ENCODE measurements at regions of chr10 and their contacts with region 1.

Region 1: GRCh38 chr10:12710594-12711349 is 290.7 kb downstream of the CCDC3 start:
- H3K4me3 Mint-ChIP-seq: no peak overlapping the region
- H3K27ac Mint-ChIP-seq: peak overlapping the region; percentile 70
- H3K4me1 Mint-ChIP-seq: peaks cover 46% of the 10 kb centered on the region
- H3K27me3 Mint-ChIP-seq: no peaks in the 10 kb centered on the region

Region 2: GRCh38 chr10:12195603-12196506 is 514.9 kb before region 1 on chr10 and contains the starts of genes CDC123 and NUDT5:
- intact Hi-C with region 1: loop called (anchors 5 kb)
- H3K4me3 Mint-ChIP-seq: peak within 1 kb of the TSS; percentile 95
- H3K27ac Mint-ChIP-seq: peak within 1 kb of the TSS; percentile 95
- H3K4me1 Mint-ChIP-seq: peaks cover 55% of the 10 kb centered on the region
- H3K27me3 Mint-ChIP-seq: no peaks in the 10 kb centered on the region

Region 3: DNA sequence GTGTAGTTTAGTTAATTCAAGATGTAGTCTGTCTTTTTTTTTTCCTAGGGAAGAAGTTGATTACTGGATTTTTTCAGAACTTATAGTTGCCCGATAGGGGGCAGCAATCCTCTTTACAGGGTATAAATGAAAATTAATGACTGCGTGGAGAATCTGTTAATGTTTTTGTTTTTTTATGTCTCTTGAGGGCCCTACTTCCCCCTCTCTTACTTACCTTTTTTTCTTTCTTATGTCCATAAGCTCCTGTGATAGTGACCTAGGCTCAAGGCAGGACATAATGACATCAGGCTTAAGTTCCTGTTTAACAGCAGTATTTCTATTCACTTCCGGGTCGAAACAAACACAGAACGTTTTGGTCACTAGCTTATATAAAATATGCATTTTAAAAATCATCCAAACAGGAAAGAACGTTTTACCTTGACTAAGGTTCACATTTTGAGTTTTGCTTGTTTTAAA is 496.0 kb before region 1 on chr10:
- intact Hi-C with region 1: loop called (anchors 5 kb)
- H3K4me3 Mint-ChIP-seq: peak overlapping the region; percentile 15
- H3K27ac Mint-ChIP-seq: peak overlapping the region; percentile 68
- H3K4me1 Mint-ChIP-seq: peaks cover 29% of the 10 kb centered on the region
- H3K27me3 Mint-ChIP-seq: no peaks in the 10 kb centered on the region

Region 4: DNA sequence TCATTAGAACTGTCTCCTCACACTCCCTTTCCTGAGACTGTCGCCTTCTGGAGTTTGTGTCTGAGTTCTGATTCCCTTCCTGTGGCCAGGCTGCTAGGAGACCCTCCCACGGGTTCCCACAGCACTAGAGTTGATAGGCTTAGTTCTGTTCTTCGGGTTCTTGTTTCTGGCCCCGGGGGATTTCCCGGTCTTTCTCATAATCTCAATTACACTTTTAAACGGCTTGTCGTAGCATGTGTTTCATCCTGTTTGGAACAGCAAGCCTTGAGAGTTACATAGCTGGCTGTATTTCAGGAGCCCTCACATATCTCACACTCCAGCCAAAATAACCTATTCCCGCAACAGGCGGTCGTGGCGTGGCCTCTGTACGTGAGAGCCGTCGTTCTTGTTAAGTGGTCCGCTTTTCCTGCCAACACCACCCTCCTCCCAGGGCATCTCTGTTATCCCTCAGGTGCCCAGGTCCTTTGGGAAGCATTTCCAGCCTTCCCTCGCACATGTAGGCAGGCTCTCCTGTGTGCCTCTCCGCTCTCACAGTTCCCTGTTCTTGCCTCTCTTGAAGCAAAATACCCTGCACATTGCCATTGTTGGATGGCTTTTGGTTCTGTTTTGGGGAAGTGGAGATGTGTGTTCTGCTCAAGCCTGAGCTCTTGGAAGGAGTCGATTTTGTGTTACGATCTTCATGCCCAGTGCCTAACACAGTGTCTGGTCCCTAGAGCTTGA is 468.8 kb before region 1 on chr10:
- intact Hi-C with region 1: loop called (anchors 10 kb)
- H3K4me3 Mint-ChIP-seq: peak overlapping the region; percentile 69
- H3K27ac Mint-ChIP-seq: peak overlapping the region; percentile 99
- H3K4me1 Mint-ChIP-seq: peaks cover 56% of the 10 kb centered on the region
- H3K27me3 Mint-ChIP-seq: no peaks in the 10 kb centered on the region

Region 5: DNA sequence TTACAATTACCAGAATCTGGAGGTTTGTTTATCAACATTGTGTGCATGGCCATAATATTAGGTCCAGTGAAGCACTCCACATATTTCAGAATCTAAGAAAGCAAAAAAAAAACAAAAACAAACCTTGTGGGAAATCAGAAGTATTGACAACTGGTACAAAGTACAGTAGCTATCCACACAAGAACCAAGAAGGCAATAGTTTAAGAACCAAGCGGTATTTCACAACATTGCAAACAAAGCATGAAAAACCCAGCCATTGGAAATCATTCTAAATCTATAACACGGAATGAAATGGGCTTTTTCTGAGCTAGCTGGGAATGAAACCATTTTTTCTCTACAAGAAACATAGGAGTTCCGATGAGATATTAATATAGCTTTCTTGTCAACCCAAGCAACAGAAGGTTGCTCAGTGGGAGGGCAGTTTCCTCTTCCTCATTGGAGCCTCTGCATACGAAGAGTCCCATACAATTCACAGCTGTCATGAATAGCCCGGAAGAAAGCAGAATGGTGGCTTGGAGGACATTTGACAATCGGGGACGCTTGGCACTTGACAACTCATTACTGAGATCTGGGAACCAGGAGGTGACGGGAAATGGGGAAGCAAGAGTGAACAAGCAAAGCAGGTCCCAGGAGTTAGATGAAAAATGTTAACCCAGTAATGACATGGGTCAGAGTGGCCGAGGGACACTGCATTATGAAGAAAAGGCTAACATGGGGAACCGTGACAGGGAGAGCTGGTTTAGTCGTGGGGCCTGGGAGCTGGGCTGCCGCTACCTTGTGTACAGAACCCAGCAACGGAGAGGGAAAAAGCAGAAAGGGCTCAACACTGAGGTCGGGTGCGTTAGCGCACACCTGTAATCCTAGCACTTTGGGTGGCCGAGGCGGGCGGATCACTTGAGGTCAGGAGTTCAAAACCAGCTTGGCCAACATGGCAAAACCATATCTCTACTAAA is 581.3 kb after region 1 on chr10:
- intact Hi-C with region 1: no loop called
- H3K4me3 Mint-ChIP-seq: no peak overlapping the region
- H3K27ac Mint-ChIP-seq: no peak overlapping the region
- H3K4me1 Mint-ChIP-seq: no peaks in the 10 kb centered on the region
- H3K27me3 Mint-ChIP-seq: no peaks in the 10 kb centered on the region